ENCODE measurements at regions of chr3 and their contacts with region 1.

Region 1: GRCh38 chr3:134308350-134308891 is 57.8 kb upstream of the RYK start:
- DNase-seq: peak; percentile 84 to 87
- H3K4me3 ChIP-seq: peak overlapping the region; percentile 15; the same call in 1 of the 2 replicates
- H3K4me3 Mint-ChIP-seq: peak overlapping the region; percentile 57
- H3K27ac Mint-ChIP-seq: peak overlapping the region; percentile 92
- H3K4me1 ChIP-seq: peaks cover 51% of the 10 kb centered on the region
- H3K4me1 Mint-ChIP-seq: peaks cover 12% of the 10 kb centered on the region
- H3K27me3 ChIP-seq: no peaks in the 10 kb centered on the region
- H3K27me3 Mint-ChIP-seq: no peaks in the 10 kb centered on the region
- CTCF ChIP-seq: peak; percentile 98

Region 2: DNA sequence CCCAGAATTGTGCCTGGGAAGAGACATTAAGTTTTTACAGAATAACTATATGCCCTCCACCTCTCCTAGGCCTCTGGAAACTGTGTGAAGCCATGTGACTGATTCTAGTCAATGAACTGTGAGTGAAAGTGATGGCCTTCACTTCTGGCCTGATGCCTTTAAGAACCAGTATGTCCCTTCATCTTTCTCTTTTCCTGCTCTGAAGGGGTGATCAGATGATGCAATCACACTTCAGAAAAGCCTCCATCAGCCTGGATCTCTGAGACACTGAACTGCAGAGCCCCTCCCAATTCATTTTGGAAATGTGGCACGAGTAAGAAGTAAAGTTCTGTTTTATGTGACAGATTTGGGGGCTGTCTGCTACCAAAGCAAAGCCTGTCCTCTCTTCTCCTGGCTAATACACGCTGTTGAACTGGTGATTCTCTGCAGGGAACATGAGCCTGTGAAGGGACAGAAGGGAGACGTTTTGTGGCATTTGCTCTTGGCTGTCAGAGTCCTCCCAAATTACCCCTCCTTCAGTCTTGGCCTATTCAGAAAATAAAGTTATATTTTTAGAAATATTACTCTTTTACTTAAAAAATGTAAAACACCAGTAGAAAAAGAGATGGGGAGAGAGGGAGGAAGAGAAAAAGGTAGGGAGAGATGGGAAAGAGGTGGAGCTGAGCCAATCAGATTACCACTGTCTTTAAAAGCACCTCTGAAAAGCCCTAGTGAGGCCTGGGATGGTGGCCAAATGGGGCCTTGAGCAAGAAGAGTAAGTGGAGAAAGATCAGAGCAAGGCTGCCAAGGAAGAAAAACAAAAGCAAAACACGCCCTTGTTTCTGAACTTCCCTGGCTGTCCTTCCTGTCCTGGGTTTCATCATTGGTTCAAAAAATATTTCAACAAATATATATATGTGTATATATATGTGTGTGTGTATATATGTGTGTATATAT is 16.8 kb before region 1 on chr3:
- CTCF ChIA-PET with region 1: no interaction called
- POLR2A ChIA-PET with region 1: no interaction called
- intact Hi-C with region 1: no loop called
- DNase-seq: no peak
- H3K4me3 ChIP-seq: no peak overlapping the region
- H3K4me3 Mint-ChIP-seq: no peak overlapping the region
- H3K27ac Mint-ChIP-seq: no peak overlapping the region
- H3K4me1 ChIP-seq: no peaks in the 10 kb centered on the region
- H3K4me1 Mint-ChIP-seq: no peaks in the 10 kb centered on the region
- H3K27me3 ChIP-seq: no peaks in the 10 kb centered on the region
- H3K27me3 Mint-ChIP-seq: no peaks in the 10 kb centered on the region
- CTCF ChIP-seq: no peak

Region 3: DNA sequence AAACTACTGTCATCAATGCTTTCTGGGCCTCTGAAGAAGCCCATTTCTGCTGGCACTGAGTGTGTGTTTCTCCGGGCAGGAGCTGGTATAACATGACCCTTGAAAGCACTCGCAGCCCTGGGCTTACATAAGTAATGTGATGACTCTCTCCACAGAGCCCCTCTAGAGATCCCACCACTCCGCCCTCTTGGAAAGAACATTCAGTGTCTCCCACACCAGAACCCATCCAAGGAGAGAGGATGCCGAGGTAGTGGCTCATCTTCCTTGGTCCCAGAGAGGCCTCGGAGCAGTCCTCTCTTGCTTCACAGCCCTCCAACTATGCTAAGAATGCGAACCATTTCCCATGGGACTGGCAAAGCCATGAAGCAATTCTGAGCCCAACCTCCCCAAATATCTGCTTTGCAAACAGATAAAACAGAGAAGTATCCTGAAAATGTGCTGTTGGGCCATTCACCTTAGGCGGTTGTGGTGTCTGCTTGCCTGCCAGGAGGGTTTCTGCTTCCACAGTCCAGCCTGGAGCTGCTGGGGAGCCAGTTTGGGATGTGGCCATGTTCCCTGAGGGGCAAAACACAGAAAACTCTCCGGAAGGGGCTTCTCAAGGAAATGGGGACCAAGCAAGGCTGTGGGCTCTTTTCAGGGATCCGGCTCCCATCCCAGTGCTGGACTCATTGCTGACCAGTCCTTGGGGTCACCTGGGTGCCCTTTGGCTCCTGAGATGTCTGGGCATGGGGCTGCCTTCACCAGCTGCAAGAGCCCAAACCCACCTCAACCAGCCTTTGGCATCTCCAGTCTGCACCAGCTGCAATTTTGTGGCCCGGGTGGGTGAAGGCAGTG is 18.6 kb after region 1 on chr3:
- CTCF ChIA-PET with region 1: interaction called, 3 read pairs
- POLR2A ChIA-PET with region 1: interaction called, 13 read pairs
- intact Hi-C with region 1: loop called (anchors 1 kb)
- DNase-seq: peak; percentile 90 to 93
- H3K4me3 ChIP-seq: no peak overlapping the region
- H3K4me3 Mint-ChIP-seq: peak overlapping the region; percentile 59
- H3K27ac Mint-ChIP-seq: peak overlapping the region; percentile 95
- H3K4me1 ChIP-seq: peaks cover 75% of the 10 kb centered on the region
- H3K4me1 Mint-ChIP-seq: peaks cover 71% of the 10 kb centered on the region
- H3K27me3 ChIP-seq: no peaks in the 10 kb centered on the region
- H3K27me3 Mint-ChIP-seq: no peaks in the 10 kb centered on the region
- CTCF ChIP-seq: no peak

Region 4: GRCh38 chr3:134350861-134351333 is 42.5 kb after region 1 on chr3:
- CTCF ChIA-PET with region 1: interaction called, 4 read pairs
- POLR2A ChIA-PET with region 1: interaction called, 3 read pairs
- intact Hi-C with region 1: loop called (anchors 1 kb)
- DNase-seq: peak; percentile 79 to 87
- H3K4me3 ChIP-seq: no peak overlapping the region
- H3K4me3 Mint-ChIP-seq: peak overlapping the region; percentile 38
- H3K27ac Mint-ChIP-seq: peak overlapping the region; percentile 65
- H3K4me1 ChIP-seq: peaks cover 83% of the 10 kb centered on the region
- H3K4me1 Mint-ChIP-seq: peaks cover 75% of the 10 kb centered on the region
- H3K27me3 ChIP-seq: no peaks in the 10 kb centered on the region
- H3K27me3 Mint-ChIP-seq: no peaks in the 10 kb centered on the region
- CTCF ChIP-seq: no peak

Region 5: GRCh38 chr3:134364061-134364935 is 55.9 kb after region 1 on chr3:
- CTCF ChIA-PET with region 1: interaction called, 8 read pairs
- POLR2A ChIA-PET with region 1: interaction called, 31 read pairs
- intact Hi-C with region 1: loop called (anchors 2 kb)
- DNase-seq: peak; percentile 95 to 97
- H3K4me3 ChIP-seq: 0 out of 2 replicates have a peak overlapping the region, but pooled peaks have one; percentile 6
- H3K4me3 Mint-ChIP-seq: peak overlapping the region; percentile 70
- H3K27ac Mint-ChIP-seq: peak overlapping the region; percentile 82
- H3K4me1 ChIP-seq: peaks cover 95% of the 10 kb centered on the region
- H3K4me1 Mint-ChIP-seq: peaks cover 42% of the 10 kb centered on the region
- H3K27me3 ChIP-seq: no peaks in the 10 kb centered on the region
- H3K27me3 Mint-ChIP-seq: no peaks in the 10 kb centered on the region
- CTCF ChIP-seq: no peak

Region 6: DNA sequence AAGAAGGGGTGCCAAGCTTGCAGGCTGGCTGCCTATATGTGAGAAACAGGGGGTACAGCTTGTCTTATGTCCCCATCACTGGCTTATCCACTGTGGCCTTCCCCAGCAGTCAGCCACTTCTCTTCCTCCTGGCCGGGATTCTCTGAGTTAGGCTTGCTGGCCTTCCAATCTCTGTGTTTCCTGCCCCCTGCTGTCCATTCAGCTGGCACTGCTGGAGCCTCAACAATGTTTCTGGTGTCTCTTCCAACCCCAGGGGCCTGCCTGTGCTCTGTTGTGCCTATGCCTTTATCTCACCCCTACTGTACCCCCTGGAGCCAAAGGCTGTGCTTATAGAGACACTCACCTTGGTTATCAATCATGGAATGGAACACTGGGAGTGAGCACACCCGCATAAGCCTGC is 140.9 kb after region 1 on chr3:
- CTCF ChIA-PET with region 1: no interaction called
- POLR2A ChIA-PET with region 1: no interaction called
- intact Hi-C with region 1: loop called (anchors 1 kb)
- DNase-seq: no peak
- H3K4me3 ChIP-seq: no peak overlapping the region
- H3K4me3 Mint-ChIP-seq: no peak overlapping the region
- H3K27ac Mint-ChIP-seq: no peak overlapping the region
- H3K4me1 ChIP-seq: peaks cover 3% of the 10 kb centered on the region; the same call in 1 of the 2 replicates
- H3K4me1 Mint-ChIP-seq: peaks cover 24% of the 10 kb centered on the region
- H3K27me3 ChIP-seq: no peaks in the 10 kb centered on the region
- H3K27me3 Mint-ChIP-seq: no peaks in the 10 kb centered on the region
- CTCF ChIP-seq: peak in 1 of 2 experiments; percentile 12

Region 7: DNA sequence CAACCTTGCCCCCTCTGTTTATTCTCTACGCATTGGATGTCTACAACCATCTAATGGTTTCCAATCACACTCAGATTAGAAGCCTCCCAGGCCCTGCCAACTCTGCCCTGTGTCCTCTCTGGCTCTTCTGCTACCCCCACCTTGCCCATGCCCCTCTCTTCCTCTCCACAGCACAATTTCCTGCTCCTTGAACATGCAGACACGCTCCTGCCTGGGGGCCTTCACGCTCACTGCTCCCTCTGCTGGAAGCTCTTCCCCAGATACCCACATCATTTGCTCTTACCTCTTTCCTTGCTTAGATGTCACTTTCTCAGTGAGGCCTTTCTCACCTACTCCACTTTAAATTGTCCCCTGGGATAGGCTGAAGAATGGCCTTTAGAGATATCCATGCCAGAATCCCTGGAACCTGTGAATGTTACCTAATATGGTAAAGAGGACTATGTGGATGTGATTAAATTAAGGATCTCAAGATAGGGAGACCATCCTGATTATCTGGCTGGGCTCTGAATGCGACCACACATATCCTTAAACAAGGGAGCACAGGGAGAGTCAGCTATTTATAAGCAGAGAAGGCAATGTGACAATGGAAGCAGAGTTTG is 332.6 kb after region 1 on chr3:
- CTCF ChIA-PET with region 1: no interaction called
- POLR2A ChIA-PET with region 1: no interaction called
- intact Hi-C with region 1: loop called (anchors 2 kb)
- DNase-seq: peak in 1 of 2 experiments; percentile 38
- H3K4me3 ChIP-seq: no peak overlapping the region
- H3K4me3 Mint-ChIP-seq: no peak overlapping the region
- H3K27ac Mint-ChIP-seq: no peak overlapping the region
- H3K4me1 ChIP-seq: no peaks in the 10 kb centered on the region
- H3K4me1 Mint-ChIP-seq: no peaks in the 10 kb centered on the region
- H3K27me3 ChIP-seq: no peaks in the 10 kb centered on the region
- H3K27me3 Mint-ChIP-seq: peaks cover 7% of the 10 kb centered on the region
- CTCF ChIP-seq: peak; percentile 70 to 72